Naive thymus-derived CD4-positive, alpha-beta T cell (primary cell): ENCODE measurements at regions of chr2 and their contacts with region 1.

Region 1: GRCh38 chr2:157628477-157629415 is at the start of gene ACVR1C:
- DNase-seq: peak; percentile 55 to 78 (median 70)
- ATAC-seq: peak; percentile 86
- H3K4me3 ChIP-seq: peak within 1 kb of the TSS; percentile 85
- H3K4me3 Mint-ChIP-seq: peak within 1 kb of the TSS; percentile 91 to 99 (median 96)
- H3K27ac ChIP-seq: peak within 1 kb of the TSS; percentile 79
- H3K27ac Mint-ChIP-seq: peak within 1 kb of the TSS; percentile 78 to 94 (median 89)
- H3K4me1 ChIP-seq: peaks cover 4 to 24% of the 10 kb centered on the region in 2 donors
- H3K4me1 Mint-ChIP-seq: peaks cover 18 to 44% (median 39%) of the 10 kb centered on the region in 7 donors
- H3K27me3 ChIP-seq: no peaks in the 10 kb centered on the region
- H3K27me3 Mint-ChIP-seq: peaks cover 0 to 36% (median 0%) of the 10 kb centered on the region in 5 donors
- total RNA-seq, gene ACVR1C: 0.73 to 11.4 (median 8.9) TPM

Region 2: GRCh38 chr2:156400706-156401678 is 1227.8 kb before region 1 on chr2:
- CTCF ChIA-PET with region 1: no interaction called
- POLR2A ChIA-PET with region 1: no interaction called
- intact Hi-C with region 1: loop called in 1 of 2 experiments (anchors 2 kb)
- DNase-seq: peak; percentile 66 to 91 (median 89)
- ATAC-seq: peak; percentile 86
- H3K4me3 ChIP-seq: peak overlapping the region; percentile 100
- H3K4me3 Mint-ChIP-seq: peak overlapping the region; percentile 86 to 96 (median 90)
- H3K27ac ChIP-seq: peak overlapping the region; percentile 95
- H3K27ac Mint-ChIP-seq: peak overlapping the region; percentile 92 to 99 (median 95)
- H3K4me1 ChIP-seq: peaks cover 5 to 6% of the 10 kb centered on the region in 2 donors
- H3K4me1 Mint-ChIP-seq: peaks cover 16 to 39% (median 23%) of the 10 kb centered on the region in 7 donors
- H3K27me3 ChIP-seq: no peaks in the 10 kb centered on the region
- H3K27me3 Mint-ChIP-seq: peaks cover 0 to 6% (median 0%) of the 10 kb centered on the region in 5 donors

Region 3: GRCh38 chr2:157413326-157414035 is 215.3 kb before region 1 on chr2:
- CTCF ChIA-PET with region 1: no interaction called
- POLR2A ChIA-PET with region 1: no interaction called
- intact Hi-C with region 1: loop called (anchors 5 kb)
- DNase-seq: peak in 7 of 9 donors; percentile 71 to 94 (median 88)
- ATAC-seq: peak; percentile 86
- H3K4me3 ChIP-seq: peak overlapping the region; percentile 22
- H3K4me3 Mint-ChIP-seq: peak overlapping the region; percentile 45 to 85 (median 68)
- H3K27ac ChIP-seq: peak overlapping the region; percentile 86
- H3K27ac Mint-ChIP-seq: peak overlapping the region; percentile 92 to 98 (median 95)
- H3K4me1 ChIP-seq: peaks cover 84 to 89% of the 10 kb centered on the region in 2 donors
- H3K4me1 Mint-ChIP-seq: peaks cover 58 to 97% (median 93%) of the 10 kb centered on the region in 7 donors
- H3K27me3 ChIP-seq: no peaks in the 10 kb centered on the region
- H3K27me3 Mint-ChIP-seq: no peaks in the 10 kb centered on the region

Region 4: DNA sequence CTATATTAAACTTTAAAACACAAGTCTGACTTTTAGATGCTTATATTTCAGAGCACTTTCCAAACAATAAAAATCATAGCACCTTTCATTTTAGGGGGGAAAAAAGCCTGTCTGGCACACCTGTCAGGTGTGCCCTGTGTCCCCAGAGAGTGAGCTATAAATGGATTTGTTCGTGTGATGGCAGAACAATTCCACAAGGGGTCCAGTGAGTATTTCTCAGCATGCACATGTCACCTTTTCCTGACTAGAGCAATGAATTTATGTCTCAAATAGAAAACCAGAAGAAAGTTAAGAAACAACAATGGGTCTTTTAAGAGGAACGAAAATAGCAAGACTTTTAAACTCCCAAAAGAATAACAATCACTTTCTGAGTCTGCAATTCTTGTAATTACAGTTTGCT is 56.0 kb before region 1 on chr2:
- CTCF ChIA-PET with region 1: no interaction called
- POLR2A ChIA-PET with region 1: no interaction called
- intact Hi-C with region 1: loop called in 1 of 2 experiments (anchors 2 kb)
- DNase-seq: peak in 5 of 9 donors; percentile 6 to 14 (median 10)
- ATAC-seq: peak; percentile 41
- H3K4me3 ChIP-seq: no peak overlapping the region
- H3K4me3 Mint-ChIP-seq: no peak overlapping the region
- H3K27ac ChIP-seq: no peak overlapping the region
- H3K27ac Mint-ChIP-seq: no peak overlapping the region
- H3K4me1 ChIP-seq: no peaks in the 10 kb centered on the region
- H3K4me1 Mint-ChIP-seq: peaks cover 0 to 12% (median 0%) of the 10 kb centered on the region in 7 donors
- H3K27me3 ChIP-seq: no peaks in the 10 kb centered on the region
- H3K27me3 Mint-ChIP-seq: no peaks in the 10 kb centered on the region

Region 5: GRCh38 chr2:157722580-157723234 is 94.0 kb after region 1 on chr2:
- CTCF ChIA-PET with region 1: no interaction called
- POLR2A ChIA-PET with region 1: no interaction called
- intact Hi-C with region 1: loop called in 1 of 2 experiments (anchors 5 kb)
- DNase-seq: peak in 1 of 9 donors; percentile 7
- ATAC-seq: no peak
- H3K4me3 ChIP-seq: no peak overlapping the region
- H3K4me3 Mint-ChIP-seq: no peak overlapping the region
- H3K27ac ChIP-seq: no peak overlapping the region
- H3K27ac Mint-ChIP-seq: no peak overlapping the region
- H3K4me1 ChIP-seq: no peaks in the 10 kb centered on the region
- H3K4me1 Mint-ChIP-seq: no peaks in the 10 kb centered on the region
- H3K27me3 ChIP-seq: no peaks in the 10 kb centered on the region
- H3K27me3 Mint-ChIP-seq: no peaks in the 10 kb centered on the region

Region 6: GRCh38 chr2:158006961-158007719 is 378.4 kb after region 1 on chr2:
- CTCF ChIA-PET with region 1: no interaction called
- POLR2A ChIA-PET with region 1: no interaction called
- intact Hi-C with region 1: loop called (anchors 1 to 2 kb)
- DNase-seq: peak in 3 of 9 donors; percentile 14 to 20 (median 18)
- ATAC-seq: peak; percentile 55
- H3K4me3 ChIP-seq: no peak overlapping the region
- H3K4me3 Mint-ChIP-seq: no peak overlapping the region
- H3K27ac ChIP-seq: no peak overlapping the region
- H3K27ac Mint-ChIP-seq: peak overlapping the region in 1 of 9 donors; percentile 1
- H3K4me1 ChIP-seq: no peaks in the 10 kb centered on the region
- H3K4me1 Mint-ChIP-seq: peaks cover 5 to 26% (median 8%) of the 10 kb centered on the region in 7 donors
- H3K27me3 ChIP-seq: no peaks in the 10 kb centered on the region
- H3K27me3 Mint-ChIP-seq: peaks cover 0 to 9% (median 2%) of the 10 kb centered on the region in 5 donors

Region 7: DNA sequence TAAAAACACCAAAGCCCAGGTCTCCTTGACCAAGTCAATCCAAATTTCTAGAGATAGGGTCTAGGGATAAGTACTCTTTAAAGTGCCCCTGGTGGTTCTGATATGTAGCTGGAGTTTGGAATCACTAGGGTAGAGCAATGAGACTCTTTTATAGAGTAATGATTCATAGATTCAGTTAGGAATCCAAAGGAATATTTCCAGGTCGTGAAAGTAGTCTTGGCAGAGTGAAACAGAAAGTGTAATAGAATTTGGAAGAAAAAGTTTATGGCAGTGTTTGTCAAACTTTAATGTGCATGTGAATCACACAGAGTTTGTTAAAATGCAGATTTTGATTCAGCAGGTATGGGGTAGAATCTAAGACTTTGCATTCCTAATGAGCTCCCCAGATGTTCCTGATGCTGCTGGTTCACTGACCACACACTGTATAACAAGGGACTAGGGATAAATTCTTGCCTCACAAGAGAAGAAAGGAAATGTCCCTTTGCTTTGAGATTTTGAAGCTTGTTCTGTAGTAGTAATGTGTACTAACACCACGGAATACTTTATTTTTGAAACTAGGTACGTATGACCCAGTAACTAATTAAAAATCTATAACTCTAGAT is 474.8 kb after region 1 on chr2:
- CTCF ChIA-PET with region 1: no interaction called
- POLR2A ChIA-PET with region 1: no interaction called
- intact Hi-C with region 1: no loop called
- DNase-seq: no peak
- ATAC-seq: no peak
- H3K4me3 ChIP-seq: no peak overlapping the region
- H3K4me3 Mint-ChIP-seq: no peak overlapping the region
- H3K27ac ChIP-seq: no peak overlapping the region
- H3K27ac Mint-ChIP-seq: no peak overlapping the region
- H3K4me1 ChIP-seq: no peaks in the 10 kb centered on the region
- H3K4me1 Mint-ChIP-seq: no peaks in the 10 kb centered on the region
- H3K27me3 ChIP-seq: no peaks in the 10 kb centered on the region
- H3K27me3 Mint-ChIP-seq: peaks cover 2 to 16% (median 11%) of the 10 kb centered on the region in 5 donors